CD4-positive, alpha-beta memory T cell (primary cell): ENCODE measurements at regions of chr11 and their contacts with region 1.

Region 1: DNA sequence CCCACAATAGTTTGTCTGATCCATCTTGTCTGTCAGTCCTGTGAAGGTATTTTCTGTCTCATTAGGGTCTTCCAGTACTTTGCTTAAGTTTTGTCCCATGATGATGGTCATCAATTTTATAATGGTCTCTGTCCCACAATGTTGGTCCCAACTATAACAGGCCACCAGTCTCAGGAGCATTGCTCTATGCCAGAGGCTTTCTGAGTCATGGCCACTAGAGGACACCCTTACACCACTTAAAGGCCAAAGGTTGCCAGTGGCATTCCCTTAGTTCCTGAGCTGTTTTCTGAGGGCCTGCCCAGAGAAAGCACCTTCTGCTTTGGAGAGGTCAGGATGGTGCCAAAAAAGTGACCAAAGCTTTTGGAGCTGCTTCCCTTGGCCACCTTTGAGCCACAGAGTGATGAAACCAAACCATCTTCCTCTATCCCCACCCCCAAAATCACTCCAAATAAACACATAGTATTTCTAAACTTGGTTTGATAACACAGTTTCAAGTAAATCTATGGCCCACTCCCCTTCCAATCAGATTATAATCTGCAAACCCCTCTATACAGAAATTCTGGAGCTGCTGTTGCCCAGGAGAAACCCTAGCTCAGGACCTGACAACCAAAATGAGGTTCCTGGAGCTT is 19.3 kb downstream of the EIF3F start:
- DNase-seq: peak; percentile 45 to 60 (median 50)
- H3K4me3 ChIP-seq: no peak overlapping the region
- H3K4me3 Mint-ChIP-seq: no peak overlapping the region
- H3K27ac ChIP-seq: no peak overlapping the region
- H3K27ac Mint-ChIP-seq: peak overlapping the region in 2 of 7 donors; percentile 7 to 39
- H3K4me1 ChIP-seq: no peaks in the 10 kb centered on the region
- H3K4me1 Mint-ChIP-seq: no peaks in the 10 kb centered on the region
- H3K27me3 ChIP-seq: no peaks in the 10 kb centered on the region
- H3K27me3 Mint-ChIP-seq: peaks cover 0 to 4% of the 10 kb centered on the region in 2 donors

Region 2: GRCh38 chr11:8018484-8019313 is 12.2 kb after region 1 on chr11:
- CTCF ChIA-PET with region 1: interaction called, 29 read pairs
- POLR2A ChIA-PET with region 1: no interaction called
- intact Hi-C with region 1: no loop called
- DNase-seq: peak; percentile 86 to 91 (median 89)
- H3K4me3 ChIP-seq: peak overlapping the region; percentile 23 to 74
- H3K4me3 Mint-ChIP-seq: peak overlapping the region; percentile 79 to 87 (median 84)
- H3K27ac ChIP-seq: peak overlapping the region; percentile 61
- H3K27ac Mint-ChIP-seq: peak overlapping the region; percentile 87 to 98 (median 93)
- H3K4me1 ChIP-seq: peaks cover 14% of the 10 kb centered on the region
- H3K4me1 Mint-ChIP-seq: peaks cover 10 to 20% (median 14%) of the 10 kb centered on the region in 4 donors
- H3K27me3 ChIP-seq: no peaks in the 10 kb centered on the region
- H3K27me3 Mint-ChIP-seq: peaks cover 15 to 20% of the 10 kb centered on the region in 2 donors

Region 3: GRCh38 chr11:8070417-8071115 is 64.1 kb after region 1 on chr11:
- CTCF ChIA-PET with region 1: interaction called, 5 read pairs
- POLR2A ChIA-PET with region 1: no interaction called
- intact Hi-C with region 1: loop called (anchors 2 kb)
- DNase-seq: no peak
- H3K4me3 ChIP-seq: no peak overlapping the region
- H3K4me3 Mint-ChIP-seq: no peak overlapping the region
- H3K27ac ChIP-seq: no peak overlapping the region
- H3K27ac Mint-ChIP-seq: no peak overlapping the region
- H3K4me1 ChIP-seq: no peaks in the 10 kb centered on the region
- H3K4me1 Mint-ChIP-seq: no peaks in the 10 kb centered on the region
- H3K27me3 ChIP-seq: no peaks in the 10 kb centered on the region
- H3K27me3 Mint-ChIP-seq: peaks cover 4% of the 10 kb centered on the region in 2 donors

Region 4: GRCh38 chr11:8099291-8099899 is 92.9 kb after region 1 on chr11:
- CTCF ChIA-PET with region 1: interaction called, 230 read pairs
- POLR2A ChIA-PET with region 1: interaction called, 3 read pairs
- intact Hi-C with region 1: loop called (anchors 1 kb)
- DNase-seq: peak; percentile 56 to 68 (median 58)
- H3K4me3 ChIP-seq: no peak overlapping the region
- H3K4me3 Mint-ChIP-seq: no peak overlapping the region
- H3K27ac ChIP-seq: no peak overlapping the region
- H3K27ac Mint-ChIP-seq: peak overlapping the region in 1 of 7 donors; percentile 1
- H3K4me1 ChIP-seq: no peaks in the 10 kb centered on the region
- H3K4me1 Mint-ChIP-seq: no peaks in the 10 kb centered on the region
- H3K27me3 ChIP-seq: no peaks in the 10 kb centered on the region
- H3K27me3 Mint-ChIP-seq: no peaks in the 10 kb centered on the region

Region 5: GRCh38 chr11:8122173-8122764 is 115.8 kb after region 1 on chr11:
- CTCF ChIA-PET with region 1: no interaction called
- POLR2A ChIA-PET with region 1: no interaction called
- intact Hi-C with region 1: no loop called
- DNase-seq: no peak
- H3K4me3 ChIP-seq: no peak overlapping the region
- H3K4me3 Mint-ChIP-seq: no peak overlapping the region
- H3K27ac ChIP-seq: no peak overlapping the region
- H3K27ac Mint-ChIP-seq: no peak overlapping the region
- H3K4me1 ChIP-seq: no peaks in the 10 kb centered on the region
- H3K4me1 Mint-ChIP-seq: peaks cover 0 to 2% (median 0%) of the 10 kb centered on the region in 4 donors
- H3K27me3 ChIP-seq: no peaks in the 10 kb centered on the region
- H3K27me3 Mint-ChIP-seq: no peaks in the 10 kb centered on the region